Activated T-helper 1 cell treated with anti-CD3 and anti-CD28 coated beads, Interleukin-12 subunit alpha, Interleukin-12 subunit beta, Interleukin-2, Interleukin-4 antibody, amounts not matched to agents 30 ng/mL and 10 ng/mL and 1 ng/mL, durations not matched to agents 14 hours and 24 hours and 36 hours (primary cell): ENCODE measurements at regions of chrX and their contacts with region 1.

Region 1: DNA sequence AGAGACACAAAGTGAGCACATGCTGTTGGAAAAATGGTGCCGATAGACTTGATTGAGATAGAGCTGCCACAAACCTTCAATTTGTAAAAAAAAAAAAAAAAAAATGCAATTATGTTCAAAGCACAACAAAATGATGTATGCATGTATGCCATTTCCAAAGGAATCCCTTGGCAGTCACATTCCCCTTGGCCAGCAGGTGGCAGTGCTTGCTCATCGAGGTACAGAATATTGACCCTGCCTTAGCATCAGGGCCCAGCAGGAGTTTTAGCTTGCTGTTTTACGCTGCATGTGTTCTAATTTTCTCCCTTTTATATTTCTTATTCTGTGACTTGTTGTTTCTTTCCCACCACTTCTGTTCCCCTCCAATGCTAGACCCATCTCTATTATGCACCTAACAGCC is 34.5 kb upstream of the CYBB start:
- DNase-seq: peak; percentile 47
- H3K4me3 Mint-ChIP-seq: no peak overlapping the region
- H3K27ac Mint-ChIP-seq: peak overlapping the region; percentile 78
- H3K4me1 Mint-ChIP-seq: peaks cover 26% of the 10 kb centered on the region
- H3K27me3 Mint-ChIP-seq: peaks cover 12% of the 10 kb centered on the region

Region 2: GRCh38 chrX:37613933-37614332 is 131.4 kb before region 1 on chrX:
- intact Hi-C with region 1: no loop called
- DNase-seq: no peak
- H3K4me3 Mint-ChIP-seq: no peak overlapping the region
- H3K27ac Mint-ChIP-seq: no peak overlapping the region
- H3K4me1 Mint-ChIP-seq: no peaks in the 10 kb centered on the region
- H3K27me3 Mint-ChIP-seq: peaks cover 2% of the 10 kb centered on the region

Region 3: DNA sequence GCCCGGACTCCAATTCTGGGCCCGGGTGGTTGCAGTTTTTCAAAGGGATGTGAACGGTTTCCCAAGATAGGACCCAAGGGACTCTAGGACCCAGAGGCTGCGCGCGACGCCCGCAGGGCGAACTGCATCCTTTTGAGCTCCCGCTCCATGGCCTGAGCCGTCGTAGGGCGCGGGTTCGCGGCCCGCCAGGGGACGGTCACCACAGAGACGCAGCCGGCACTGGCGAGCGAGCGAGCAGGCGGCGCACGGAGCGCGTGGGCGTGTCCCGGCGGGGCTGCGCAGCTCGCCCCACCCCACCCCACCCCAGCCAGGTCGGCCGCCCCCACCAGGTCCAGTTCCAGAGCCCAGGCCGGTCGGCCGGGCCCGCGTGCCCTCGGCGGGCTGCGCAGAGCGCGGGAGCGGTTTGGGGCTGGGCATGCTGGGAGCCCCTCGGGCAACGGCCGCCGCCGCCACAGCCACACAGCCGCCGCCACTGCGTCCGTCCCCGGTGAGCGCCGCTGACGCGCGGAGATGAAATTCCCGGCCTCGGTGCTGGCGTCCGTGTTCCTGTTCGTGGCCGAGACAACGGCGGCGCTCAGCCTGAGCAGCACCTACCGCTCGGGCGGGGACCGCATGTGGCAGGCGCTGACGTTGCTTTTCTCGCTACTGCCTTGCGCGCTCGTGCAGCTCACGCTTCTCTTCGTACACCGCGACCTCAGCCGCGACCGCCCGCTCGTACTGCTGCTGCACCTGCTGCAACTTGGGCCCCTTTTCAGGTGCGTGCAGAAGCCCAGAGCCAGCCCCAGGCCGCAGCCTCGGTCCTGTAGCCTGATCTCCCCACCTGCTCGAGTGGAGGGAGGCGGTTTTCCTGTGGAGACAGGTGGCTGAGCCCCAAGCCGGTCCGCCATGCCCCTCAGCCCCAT is 59.7 kb before region 1 on chrX and contains the start of gene XK:
- intact Hi-C with region 1: loop called (anchors 5 kb)
- DNase-seq: peak; percentile 21
- H3K4me3 Mint-ChIP-seq: peak within 1 kb of the TSS; percentile 75
- H3K27ac Mint-ChIP-seq: no peak within 1 kb of the TSS
- H3K4me1 Mint-ChIP-seq: no peaks in the 10 kb centered on the region
- H3K27me3 Mint-ChIP-seq: peaks cover 2% of the 10 kb centered on the region
- total RNA-seq, gene XK: 0.27 and 0.39 TPM in 2 replicates

Region 4: DNA sequence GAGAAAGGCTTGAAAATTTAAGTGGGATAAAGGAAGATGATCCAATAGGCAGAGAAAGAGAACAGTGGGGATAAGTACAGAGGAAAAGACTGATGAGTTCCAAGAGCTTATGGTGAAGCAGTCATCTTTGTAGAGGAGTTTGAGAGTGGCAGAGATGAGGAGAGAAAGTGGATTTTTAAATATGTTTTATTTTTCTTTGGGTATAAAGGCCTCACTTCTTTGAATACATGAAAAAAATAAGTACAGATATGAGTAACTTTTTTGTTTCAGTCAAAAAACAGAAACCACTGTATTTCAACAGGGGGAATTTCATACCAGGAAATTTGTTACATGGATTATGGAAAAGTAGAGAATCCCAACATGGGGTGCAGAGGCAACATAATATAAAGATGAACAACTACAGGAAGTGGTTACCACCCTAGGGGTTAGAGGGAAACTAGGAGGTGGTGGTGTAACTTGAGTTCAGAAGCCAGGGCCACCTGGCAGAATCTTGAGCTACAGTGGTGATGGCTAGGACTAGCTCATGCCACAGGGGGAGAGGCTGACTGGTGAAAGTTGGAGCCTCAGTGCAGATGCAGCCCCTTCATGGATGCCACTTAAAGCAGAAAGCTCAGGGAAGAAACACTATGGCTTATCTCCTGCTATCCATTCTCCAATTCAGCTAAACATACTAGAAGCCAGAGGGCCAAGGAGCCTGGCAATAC is 31.1 kb after region 1 on chrX:
- intact Hi-C with region 1: loop called (anchors 2 kb)
- DNase-seq: no peak
- H3K4me3 Mint-ChIP-seq: peak overlapping the region; percentile 40
- H3K27ac Mint-ChIP-seq: peak overlapping the region; percentile 32
- H3K4me1 Mint-ChIP-seq: peaks cover 22% of the 10 kb centered on the region
- H3K27me3 Mint-ChIP-seq: no peaks in the 10 kb centered on the region

Region 5: GRCh38 chrX:37825209-37825842 is 80.0 kb after region 1 on chrX:
- intact Hi-C with region 1: loop called (anchors 1 kb)
- DNase-seq: peak; percentile 17
- H3K4me3 Mint-ChIP-seq: no peak overlapping the region
- H3K27ac Mint-ChIP-seq: no peak overlapping the region
- H3K4me1 Mint-ChIP-seq: peaks cover 30% of the 10 kb centered on the region
- H3K27me3 Mint-ChIP-seq: no peaks in the 10 kb centered on the region

Region 6: GRCh38 chrX:37846934-37847732 is 101.8 kb after region 1 on chrX and contains the start of gene DYNLT3:
- intact Hi-C with region 1: loop called (anchors 1 kb)
- DNase-seq: peak; percentile 75
- H3K4me3 Mint-ChIP-seq: peak within 1 kb of the TSS; percentile 80
- H3K27ac Mint-ChIP-seq: peak within 1 kb of the TSS; percentile 86
- H3K4me1 Mint-ChIP-seq: peaks cover 17% of the 10 kb centered on the region
- H3K27me3 Mint-ChIP-seq: no peaks in the 10 kb centered on the region
- total RNA-seq, gene DYNLT3: 15.3 and 16.7 TPM in 2 replicates

Region 7: DNA sequence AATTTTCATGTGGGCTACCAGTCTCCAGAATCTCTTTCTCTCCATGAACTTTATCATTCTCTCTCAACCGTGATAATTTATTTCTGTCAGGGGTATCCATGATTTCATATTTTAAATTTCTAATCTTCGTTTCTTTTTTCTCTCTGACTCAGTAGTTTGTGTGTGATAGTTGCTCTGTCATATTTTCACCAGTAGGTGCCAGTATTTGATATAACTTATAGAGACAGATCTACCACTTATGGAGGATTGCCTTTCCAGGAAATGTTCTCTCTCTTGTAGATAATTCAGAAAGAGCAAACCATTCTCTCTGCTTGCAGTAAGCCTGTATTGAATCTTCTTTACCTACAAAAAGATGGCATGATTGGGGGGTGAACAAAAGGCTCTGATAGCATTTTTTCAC is 181.3 kb after region 1 on chrX:
- intact Hi-C with region 1: loop called (anchors 5 kb)
- DNase-seq: no peak
- H3K4me3 Mint-ChIP-seq: no peak overlapping the region
- H3K27ac Mint-ChIP-seq: no peak overlapping the region
- H3K4me1 Mint-ChIP-seq: no peaks in the 10 kb centered on the region
- H3K27me3 Mint-ChIP-seq: peaks cover 5% of the 10 kb centered on the region

Region 8: DNA sequence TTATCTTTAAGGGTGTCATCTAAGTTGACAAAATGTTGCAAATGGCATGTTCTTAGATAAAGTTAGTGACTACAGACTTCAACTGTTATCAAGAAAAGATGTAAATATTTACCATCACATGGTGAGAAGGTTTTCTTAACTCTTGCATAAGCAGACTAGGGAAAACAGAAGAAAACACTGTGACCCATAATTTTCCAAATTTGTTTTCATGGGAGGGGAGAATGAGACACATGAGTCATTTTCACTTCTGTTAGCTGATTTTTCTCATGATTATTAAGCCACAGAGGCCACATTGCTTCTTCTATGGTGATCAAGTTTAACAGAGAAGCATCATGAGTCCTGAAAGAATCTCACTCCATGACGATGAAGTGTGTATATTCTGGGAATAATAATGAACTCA is 230.8 kb after region 1 on chrX:
- intact Hi-C with region 1: loop called (anchors 1 kb)
- DNase-seq: no peak
- H3K4me3 Mint-ChIP-seq: no peak overlapping the region
- H3K27ac Mint-ChIP-seq: no peak overlapping the region
- H3K4me1 Mint-ChIP-seq: peaks cover 19% of the 10 kb centered on the region
- H3K27me3 Mint-ChIP-seq: no peaks in the 10 kb centered on the region